GM10248 (cell line): ENCODE measurements at regions of chr17 and their contacts with region 1.

Region 1: GRCh38 chr17:48002266-48002915 is 31.5 kb downstream of the CDK5RAP3 start:
- DNase-seq: peak; percentile 68
- CTCF ChIP-seq: no peak

Region 2: GRCh38 chr17:47915776-47916398 is 86.5 kb before region 1 on chr17:
- CTCF ChIA-PET with region 1: no interaction called
- POLR2A ChIA-PET with region 1: no interaction called
- DNase-seq: no peak
- CTCF ChIP-seq: no peak

Region 3: DNA sequence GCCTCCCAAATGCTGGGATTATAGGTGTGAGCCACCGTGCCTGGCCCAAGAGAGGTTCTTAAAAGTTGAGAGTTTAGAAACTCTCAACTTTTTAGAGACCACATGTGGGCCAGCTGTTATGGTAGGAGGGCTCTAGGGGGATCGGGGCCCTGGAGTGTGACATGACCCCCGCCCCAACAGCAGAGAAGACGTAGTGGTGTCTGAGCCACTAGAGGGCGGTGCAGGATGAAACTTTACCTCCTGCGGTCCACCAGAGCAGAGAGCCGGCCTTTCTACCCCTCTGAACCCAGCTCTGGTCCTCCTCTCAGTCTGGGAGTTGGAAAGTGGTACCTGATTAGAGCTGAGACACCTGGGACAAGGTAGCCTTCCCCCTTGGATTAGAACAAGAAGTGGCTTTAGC is 24.1 kb before region 1 on chr17:
- CTCF ChIA-PET with region 1: interaction called, 33 read pairs
- POLR2A ChIA-PET with region 1: interaction called, 3 read pairs
- DNase-seq: peak; percentile 81
- CTCF ChIP-seq: peak; percentile 71